Activated CD4-positive, alpha-beta T cell treated with anti-CD3 and anti-CD28 coated beads, Interleukin-2, amount 10 ng/mL, durations not matched to agents 24 days and 14 days (primary cell): ENCODE measurements at regions of chr14 and their contacts with region 1.

Region 1: DNA sequence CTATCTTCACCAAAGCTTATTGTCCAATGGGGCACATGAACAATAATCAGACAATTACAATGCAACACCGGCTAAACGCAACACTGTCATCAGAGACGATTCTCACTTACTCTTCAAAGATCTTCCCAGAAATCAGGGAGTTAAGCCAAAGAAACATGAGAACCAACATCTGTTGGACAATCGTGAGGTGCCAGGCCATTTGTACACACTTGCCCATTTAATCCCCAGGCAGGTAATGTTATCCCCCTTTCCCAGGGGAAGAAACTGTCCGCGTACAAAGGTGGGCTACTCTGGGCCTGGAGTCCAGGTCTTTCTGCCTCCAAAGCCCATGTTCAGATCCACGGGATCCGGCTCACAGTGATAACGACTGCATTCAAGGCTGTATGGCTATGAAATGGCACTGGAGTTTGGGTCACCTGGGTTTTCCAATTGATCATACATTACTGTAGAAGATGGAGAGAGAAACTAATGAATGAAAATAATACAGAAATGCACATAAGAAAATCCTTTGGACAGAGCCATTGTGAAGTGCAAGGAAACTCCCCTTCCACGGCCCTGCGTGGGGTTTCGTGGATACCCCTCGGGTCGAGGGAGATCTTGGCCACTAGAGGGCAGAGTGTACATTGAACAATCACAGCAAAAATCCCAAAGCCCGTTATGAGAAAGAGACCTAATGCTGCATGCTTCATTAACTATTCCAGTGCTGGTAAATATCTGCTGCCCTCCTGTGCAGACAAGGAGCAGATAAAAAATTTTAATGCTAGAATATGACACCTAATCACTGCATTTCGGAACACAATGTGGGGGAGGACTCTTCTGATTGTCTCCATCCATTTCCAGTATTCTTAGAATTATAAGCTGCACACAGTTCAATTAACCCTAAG is 111.4 kb downstream of the EGLN3 start:
- DNase-seq: peak; percentile 89
- H3K4me3 Mint-ChIP-seq: no peak overlapping the region
- H3K27ac Mint-ChIP-seq: no peak overlapping the region
- H3K4me1 Mint-ChIP-seq: peaks cover 38% of the 10 kb centered on the region
- H3K27me3 Mint-ChIP-seq: no peaks in the 10 kb centered on the region

Region 2: GRCh38 chr14:32986791-32987540 is 852.5 kb before region 1 on chr14:
- intact Hi-C with region 1: no loop called
- DNase-seq: no peak
- H3K4me3 Mint-ChIP-seq: no peak overlapping the region
- H3K27ac Mint-ChIP-seq: no peak overlapping the region
- H3K4me1 Mint-ChIP-seq: no peaks in the 10 kb centered on the region
- H3K27me3 Mint-ChIP-seq: no peaks in the 10 kb centered on the region

Region 3: DNA sequence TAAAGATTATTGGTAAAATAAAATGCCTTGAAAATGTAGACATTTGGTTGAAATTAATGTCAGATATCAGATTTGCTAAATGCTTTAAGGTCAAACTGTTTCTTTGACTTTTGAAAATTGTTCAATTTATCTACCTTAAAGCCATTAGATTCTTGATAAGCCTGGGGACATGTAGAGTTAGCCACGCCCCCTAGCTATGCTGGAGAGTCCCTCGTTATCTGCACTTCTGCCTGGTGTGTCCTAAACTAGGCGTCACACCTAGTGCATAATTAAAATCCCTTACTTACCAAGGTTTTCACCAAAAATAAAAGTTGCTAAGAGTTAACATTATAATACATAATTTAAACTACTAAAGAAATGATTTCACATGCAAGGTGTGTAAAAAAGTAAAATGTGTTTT is 32.0 kb after region 1 on chr14:
- intact Hi-C with region 1: no loop called
- DNase-seq: no peak
- H3K4me3 Mint-ChIP-seq: no peak overlapping the region
- H3K27ac Mint-ChIP-seq: no peak overlapping the region
- H3K4me1 Mint-ChIP-seq: peaks cover 2% of the 10 kb centered on the region
- H3K27me3 Mint-ChIP-seq: peaks cover 12% of the 10 kb centered on the region

Region 4: DNA sequence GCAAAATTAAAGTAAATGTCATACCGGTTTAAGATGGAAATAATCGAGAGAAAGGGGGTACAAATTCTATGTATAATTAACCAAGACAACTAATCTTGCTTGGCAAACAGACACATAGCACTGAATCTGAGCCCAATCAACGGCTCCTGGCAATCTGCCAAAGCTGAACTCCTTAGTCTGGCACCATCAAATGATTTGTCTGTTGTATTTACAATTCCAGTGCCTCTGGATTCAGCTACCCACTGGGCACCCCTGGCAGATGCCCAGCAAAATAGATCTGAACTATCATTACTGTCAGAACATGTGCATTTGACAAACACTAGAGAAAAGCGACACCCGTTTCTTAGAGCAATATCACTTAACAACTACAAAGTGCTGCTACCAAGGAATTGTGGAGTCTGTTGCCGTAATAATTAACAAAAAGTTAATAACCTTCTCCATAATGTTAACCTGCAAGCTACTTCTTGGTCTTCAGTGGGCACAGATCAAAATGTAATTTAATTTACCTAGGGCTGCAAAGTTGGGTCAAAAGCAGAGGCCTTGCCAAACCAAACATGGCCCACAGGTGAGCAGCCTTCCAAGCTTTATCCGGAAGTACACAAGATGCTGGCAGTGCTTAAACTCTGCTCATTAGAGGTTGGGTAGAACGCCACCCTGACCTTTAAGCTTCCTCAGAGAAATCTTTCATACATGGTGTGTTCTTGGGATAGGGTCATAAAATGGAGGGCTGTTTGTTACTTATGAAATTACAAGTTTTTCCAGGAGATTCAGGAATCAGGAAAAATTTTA is 103.9 kb after region 1 on chr14:
- intact Hi-C with region 1: loop called (anchors 10 kb)
- DNase-seq: no peak
- H3K4me3 Mint-ChIP-seq: no peak overlapping the region
- H3K27ac Mint-ChIP-seq: no peak overlapping the region
- H3K4me1 Mint-ChIP-seq: peaks cover 44% of the 10 kb centered on the region
- H3K27me3 Mint-ChIP-seq: peaks cover 17% of the 10 kb centered on the region

Region 5: GRCh38 chr14:34098045-34098984 is 258.9 kb after region 1 on chr14:
- intact Hi-C with region 1: loop called (anchors 1 kb)
- DNase-seq: peak; percentile 82
- H3K4me3 Mint-ChIP-seq: no peak overlapping the region
- H3K27ac Mint-ChIP-seq: peak overlapping the region; percentile 12
- H3K4me1 Mint-ChIP-seq: peaks cover 42% of the 10 kb centered on the region
- H3K27me3 Mint-ChIP-seq: peaks cover 2% of the 10 kb centered on the region

Region 6: DNA sequence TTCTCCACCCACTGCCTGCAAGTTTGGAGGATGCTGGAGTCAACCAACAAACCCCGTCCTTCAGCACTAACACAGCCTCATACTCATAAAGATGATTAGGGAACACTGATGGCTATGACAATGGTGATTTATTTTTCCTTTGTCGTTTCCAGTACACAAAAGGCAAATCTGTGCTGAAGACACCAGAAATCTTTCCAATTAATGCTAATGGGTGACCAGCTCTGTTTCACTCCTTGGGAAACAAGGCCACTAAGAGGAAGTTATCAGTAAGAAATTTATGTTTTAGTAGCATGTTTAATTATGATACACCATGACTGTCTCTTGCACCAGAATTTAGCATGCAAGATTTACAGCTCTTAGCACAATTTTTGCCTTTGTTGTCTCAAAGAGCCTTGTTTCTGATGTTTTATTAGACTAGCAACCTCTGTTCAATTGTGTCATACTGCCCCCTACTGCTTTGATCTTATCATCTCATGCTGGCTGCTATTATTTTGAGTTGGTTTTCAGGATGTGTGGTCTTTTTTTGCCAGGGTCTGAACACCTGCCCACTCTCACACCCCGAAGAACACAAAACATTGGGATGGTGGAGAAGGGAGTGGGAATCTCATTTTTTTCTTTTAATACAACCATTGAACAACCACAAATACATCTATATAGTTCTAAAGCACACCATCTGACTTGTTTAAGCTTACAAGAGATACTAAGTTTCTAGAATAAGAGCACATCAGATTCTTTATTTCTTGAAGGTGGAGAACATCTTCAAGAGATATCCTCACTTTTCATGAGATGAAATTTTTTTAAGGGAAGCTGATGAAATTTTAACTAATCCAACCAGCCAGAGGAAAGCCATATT is 461.7 kb after region 1 on chr14:
- intact Hi-C with region 1: loop called (anchors 2 kb)
- DNase-seq: peak; percentile 78
- H3K4me3 Mint-ChIP-seq: no peak overlapping the region
- H3K27ac Mint-ChIP-seq: no peak overlapping the region
- H3K4me1 Mint-ChIP-seq: no peaks in the 10 kb centered on the region
- H3K27me3 Mint-ChIP-seq: no peaks in the 10 kb centered on the region

Region 7: DNA sequence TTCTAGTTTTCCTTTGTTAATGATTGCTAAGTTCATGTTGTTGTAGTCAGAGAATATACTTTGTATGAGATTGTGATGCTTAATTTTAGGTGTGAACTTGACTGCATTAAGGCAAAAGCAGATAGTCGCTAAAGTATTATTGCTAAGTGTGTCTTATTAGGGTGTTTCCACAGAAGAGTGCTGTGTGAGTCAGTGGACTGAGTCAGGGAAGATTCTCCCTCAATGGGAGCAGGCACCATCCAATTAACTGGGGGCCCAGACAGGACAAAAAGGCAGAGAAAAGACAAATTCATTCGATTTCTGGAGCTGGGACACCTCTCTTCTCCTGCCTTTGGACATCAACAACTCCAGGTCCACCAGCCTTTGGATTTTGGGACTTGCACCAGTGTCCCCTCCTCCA is 987.2 kb after region 1 on chr14:
- intact Hi-C with region 1: no loop called
- DNase-seq: no peak
- H3K4me3 Mint-ChIP-seq: no peak overlapping the region
- H3K27ac Mint-ChIP-seq: peak overlapping the region; percentile 23
- H3K4me1 Mint-ChIP-seq: peaks cover 28% of the 10 kb centered on the region
- H3K27me3 Mint-ChIP-seq: no peaks in the 10 kb centered on the region